H1 (cell line): ENCODE measurements at regions of chr22 and their contacts with region 1.

Region 1: DNA sequence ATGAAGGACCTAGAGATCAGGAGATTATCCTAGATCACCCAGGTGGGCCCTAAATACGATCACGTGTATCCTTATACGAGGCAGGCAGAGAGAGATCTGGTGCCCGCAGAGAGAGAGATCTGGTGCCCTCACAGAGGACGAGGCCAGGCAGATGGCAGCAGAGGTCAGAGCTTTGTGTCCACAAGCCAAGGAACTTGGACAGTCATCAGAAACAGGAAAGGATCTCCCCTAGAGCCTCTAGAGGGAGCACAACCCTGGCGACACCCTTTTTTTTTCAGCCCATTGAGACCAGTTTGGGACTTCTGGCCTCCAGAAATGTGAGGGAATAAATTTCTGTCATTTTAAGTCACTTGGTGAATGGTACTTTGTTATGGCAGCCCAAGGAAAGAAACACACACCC is 25.5 kb upstream of the TIMP3 start:
- DNase-seq: no peak
- H3K4me3 ChIP-seq: no peak overlapping the region
- H3K27ac ChIP-seq: no peak overlapping the region
- H3K4me1 ChIP-seq: peaks cover 0 to 4% (median 3%) of the 10 kb centered on the region in 4 experiments; a peak in 3 of 7 replicates
- H3K27me3 ChIP-seq: no peaks in the 10 kb centered on the region
- CTCF ChIP-seq: peak; percentile 51 to 72 (median 59)
- EP300 ChIP-seq: no peak
- POLR2A ChIP-seq: no peak
- RAD21 ChIP-seq: peak; percentile 34 to 50

Region 2: DNA sequence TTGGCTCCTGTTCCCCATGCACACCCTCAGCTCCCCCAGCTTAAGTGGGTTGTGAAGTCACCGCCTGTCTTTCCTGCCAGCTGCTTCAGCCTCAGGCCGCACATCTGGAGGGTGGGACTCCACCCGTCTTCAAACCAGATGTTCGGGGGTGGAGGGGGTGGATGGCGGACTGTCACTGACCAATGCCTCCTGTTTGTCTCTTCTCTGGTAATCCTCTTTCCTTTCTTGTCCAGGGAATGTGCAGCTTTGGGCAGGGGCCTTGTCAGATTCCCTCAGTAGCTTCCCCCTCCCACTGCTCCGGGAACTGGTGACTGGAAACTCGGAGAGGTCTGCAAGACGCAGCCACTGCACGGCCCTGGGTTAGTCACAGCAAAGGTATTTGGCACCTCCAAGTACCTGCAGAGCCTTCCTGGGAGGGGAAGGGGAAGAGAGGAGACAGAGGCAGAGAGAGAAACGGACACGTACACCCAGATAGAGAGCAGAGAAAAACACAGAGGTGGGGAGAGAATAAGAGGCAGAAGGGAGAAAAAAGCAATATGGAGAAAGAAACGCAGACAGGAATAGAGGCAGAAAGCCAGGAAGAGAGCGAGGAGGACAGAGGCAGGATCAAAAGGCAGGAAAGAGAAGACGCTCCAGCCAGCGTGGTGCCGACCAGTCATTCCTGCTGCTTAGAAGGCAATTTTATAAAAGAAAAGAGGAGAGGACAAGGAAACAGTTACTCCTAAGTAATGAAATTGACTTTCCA is 30.5 kb before region 1 on chr22:
- CTCF ChIA-PET with region 1: interaction called, 10 read pairs
- POLR2A ChIA-PET with region 1: no interaction called
- DNase-seq: peak in 1 of 2 experiments; percentile 27
- H3K4me3 ChIP-seq: no peak overlapping the region
- H3K27ac ChIP-seq: no peak overlapping the region
- H3K4me1 ChIP-seq: no peaks in the 10 kb centered on the region; a peak in 2 of 7 replicates
- H3K27me3 ChIP-seq: no peaks in the 10 kb centered on the region; a peak in 1 of 7 replicates
- CTCF ChIP-seq: no peak
- EP300 ChIP-seq: no peak
- POLR2A ChIP-seq: no peak
- RAD21 ChIP-seq: no peak

Region 3: GRCh38 chr22:32764330-32765131 is 11.4 kb before region 1 on chr22:
- CTCF ChIA-PET with region 1: interaction called, 22 read pairs
- POLR2A ChIA-PET with region 1: no interaction called
- DNase-seq: no peak
- H3K4me3 ChIP-seq: no peak overlapping the region
- H3K27ac ChIP-seq: no peak overlapping the region
- H3K4me1 ChIP-seq: peaks cover 0 to 4% (median 0%) of the 10 kb centered on the region in 4 experiments; a peak in 4 of 7 replicates
- H3K27me3 ChIP-seq: no peaks in the 10 kb centered on the region; a peak in 1 of 7 replicates
- CTCF ChIP-seq: no peak
- EP300 ChIP-seq: no peak
- POLR2A ChIP-seq: no peak
- RAD21 ChIP-seq: no peak

Region 4: DNA sequence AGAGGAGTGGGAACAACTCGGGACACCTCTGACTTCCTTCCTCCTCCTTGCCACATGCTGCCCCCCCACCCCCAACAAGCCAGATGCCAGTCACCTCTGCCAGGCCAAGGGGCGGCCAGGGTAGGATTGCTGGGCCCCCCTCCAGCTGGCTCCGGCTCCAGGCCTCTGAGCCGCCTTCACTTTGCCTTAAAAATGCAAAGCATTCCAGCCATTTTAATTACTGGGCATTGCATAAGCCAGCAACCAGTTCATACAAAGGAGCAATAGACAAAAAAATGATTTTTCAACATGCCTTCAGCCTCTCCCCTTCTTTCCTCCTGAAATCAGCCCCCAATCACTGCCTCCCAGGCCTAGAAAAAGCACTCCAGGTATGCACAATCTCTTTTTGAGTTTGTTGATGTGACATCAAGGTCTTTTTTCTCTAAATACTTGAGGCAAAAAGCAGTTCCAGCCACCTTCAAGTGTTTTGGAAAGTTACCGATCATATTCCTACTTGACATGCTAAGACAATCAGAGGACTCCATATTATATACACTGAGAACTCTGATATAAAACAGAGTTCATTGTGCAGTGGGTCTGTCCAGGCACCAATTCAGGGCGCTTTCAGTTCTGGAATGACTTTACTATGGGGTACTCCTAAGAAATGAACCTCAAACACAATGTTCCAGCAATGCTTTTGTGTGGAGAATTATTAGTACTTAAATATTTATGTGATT is 13.1 kb after region 1 on chr22:
- CTCF ChIA-PET with region 1: interaction called, 47 read pairs
- POLR2A ChIA-PET with region 1: interaction called, 3 read pairs
- DNase-seq: no peak
- H3K4me3 ChIP-seq: no peak overlapping the region
- H3K27ac ChIP-seq: no peak overlapping the region
- H3K4me1 ChIP-seq: peaks cover 0 to 3% (median 0%) of the 10 kb centered on the region in 4 experiments; a peak in 2 of 7 replicates
- H3K27me3 ChIP-seq: no peaks in the 10 kb centered on the region
- CTCF ChIP-seq: no peak
- EP300 ChIP-seq: no peak
- POLR2A ChIP-seq: no peak
- RAD21 ChIP-seq: no peak